ENCODE measurements at regions of chr6 and their contacts with region 1.

Region 1: DNA sequence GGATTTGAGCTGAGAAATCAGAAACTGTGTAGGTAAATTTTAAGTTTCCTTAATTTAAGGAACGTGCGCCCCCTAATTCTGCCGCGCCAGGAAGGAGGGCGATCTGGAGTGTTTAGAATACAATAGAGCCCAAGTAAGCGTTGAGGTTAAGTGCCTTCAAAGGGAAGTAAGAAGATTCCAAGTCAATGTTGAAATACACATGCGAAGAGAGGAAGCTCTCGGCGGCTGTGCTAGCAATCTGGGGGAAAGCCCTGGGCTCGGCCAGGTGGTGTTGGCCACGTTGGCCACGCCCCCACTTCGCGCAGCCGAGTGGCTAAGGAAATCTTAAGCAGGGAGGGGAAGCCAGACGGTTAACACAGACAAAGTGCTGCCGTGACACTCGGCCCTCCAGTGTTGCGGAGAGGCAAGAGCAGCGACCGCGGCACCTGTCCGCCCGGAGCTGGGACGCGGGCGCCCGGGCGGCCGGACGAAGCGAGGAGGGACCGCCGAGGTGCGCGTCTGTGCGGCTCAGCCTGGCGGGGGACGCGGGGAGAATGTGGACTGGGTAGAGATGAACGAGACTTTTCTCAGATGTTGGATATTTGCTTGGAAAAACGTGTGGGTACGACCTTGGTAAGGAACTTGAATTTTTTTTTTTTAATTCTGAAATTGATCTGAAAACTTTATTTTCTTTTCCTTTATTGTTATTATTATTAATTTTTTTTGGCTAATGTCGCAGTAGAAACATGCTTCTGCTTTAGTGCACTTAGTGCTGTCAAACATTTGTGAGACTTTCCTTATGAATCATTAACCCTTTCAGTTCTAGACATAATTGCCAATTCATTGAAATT is at the start of gene PRDM1:
- DNase-seq: peak; percentile 48 to 68
- ATAC-seq: peak; percentile 63 to 69
- H3K4me3 ChIP-seq: peak within 1 kb of the TSS; percentile 53 to 69 (median 59)
- H3K27ac ChIP-seq: peak within 1 kb of the TSS; percentile 29 to 54 (median 45)
- H3K4me1 ChIP-seq: peaks cover 7 to 10% of the 10 kb centered on the region in 2 donors
- H3K27me3 ChIP-seq: peaks cover 0 to 13% (median 0%) of the 10 kb centered on the region in 3 donors
- CTCF ChIP-seq: peak in 3 of 5 experiments; percentile 25 to 31 (median 28)
- POLR2A ChIP-seq: peak in 1 of 2 donors; percentile 52
- total RNA-seq, gene PRDM1: 1.6 to 2.4 (median 1.9) TPM

Region 2: GRCh38 chr6:105484238-105485161 is 601.7 kb before region 1 on chr6:
- in situ Hi-C with region 1: no loop called
- intact Hi-C with region 1: loop called (anchors 10 kb)
- DNase-seq: no peak
- ATAC-seq: peak in 1 of 2 donors; percentile 46
- H3K4me3 ChIP-seq: no peak overlapping the region
- H3K27ac ChIP-seq: no peak overlapping the region
- H3K4me1 ChIP-seq: peaks cover 0 to 3% of the 10 kb centered on the region in 2 donors
- H3K27me3 ChIP-seq: no peaks in the 10 kb centered on the region
- CTCF ChIP-seq: peak; percentile 61 to 89 (median 77)
- POLR2A ChIP-seq: no peak

Region 3: DNA sequence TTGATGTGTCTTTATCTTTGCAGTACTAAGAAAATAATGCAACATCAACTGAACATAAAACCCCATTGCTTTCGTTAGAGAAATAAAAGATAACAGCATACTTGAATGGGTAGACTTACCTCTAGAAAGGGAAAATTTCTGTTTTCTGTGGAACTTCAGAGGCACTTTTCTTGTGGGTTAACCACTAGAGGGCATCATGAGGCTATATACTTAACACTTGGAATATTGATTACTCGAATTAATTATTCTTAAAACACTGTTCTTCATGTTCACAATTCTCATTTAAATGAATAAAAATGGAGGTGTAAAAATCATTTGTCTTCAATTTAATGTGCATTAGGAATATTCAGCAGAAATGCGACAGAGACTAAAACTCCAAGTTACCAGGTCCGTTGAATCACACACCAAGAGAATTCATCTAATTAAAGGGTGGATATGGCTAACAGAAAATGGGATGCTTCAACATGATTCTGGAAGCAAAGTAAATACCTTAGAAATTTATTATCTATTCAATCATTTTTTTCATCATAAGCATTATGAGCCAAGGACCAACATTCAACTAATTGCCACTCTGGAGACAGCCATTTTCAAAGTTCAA is 352.5 kb before region 1 on chr6:
- in situ Hi-C with region 1: no loop called
- intact Hi-C with region 1: loop called (anchors 5 kb)
- DNase-seq: no peak
- ATAC-seq: no peak
- H3K4me3 ChIP-seq: no peak overlapping the region
- H3K27ac ChIP-seq: no peak overlapping the region
- H3K4me1 ChIP-seq: no peaks in the 10 kb centered on the region
- H3K27me3 ChIP-seq: no peaks in the 10 kb centered on the region
- CTCF ChIP-seq: peak; percentile 44 to 64 (median 56)
- POLR2A ChIP-seq: no peak

Region 4: GRCh38 chr6:105793130-105793529 is 293.1 kb before region 1 on chr6:
- in situ Hi-C with region 1: no loop called
- intact Hi-C with region 1: loop called (anchors 5 kb)
- DNase-seq: no peak
- ATAC-seq: no peak
- H3K4me3 ChIP-seq: no peak overlapping the region
- H3K27ac ChIP-seq: peak overlapping the region in 3 of 4 donors; percentile 81 to 91 (median 90)
- H3K4me1 ChIP-seq: peaks cover 46 to 49% of the 10 kb centered on the region in 2 donors
- H3K27me3 ChIP-seq: no peaks in the 10 kb centered on the region
- CTCF ChIP-seq: no peak
- POLR2A ChIP-seq: no peak

Measured in gastrocnemius medialis (tissue), 4 donors.